ENCODE measurements at regions of chr17 and their contacts with region 1.

Region 1: GRCh38 chr17:78428836-78429617 is 50.6 kb downstream of the PGS1 start:
- DNase-seq: no peak
- ATAC-seq: no peak
- H3K4me3 ChIP-seq: no peak overlapping the region
- H3K4me3 Mint-ChIP-seq: no peak overlapping the region
- H3K27ac ChIP-seq: no peak overlapping the region
- H3K27ac Mint-ChIP-seq: no peak overlapping the region
- H3K4me1 ChIP-seq: no peaks in the 10 kb centered on the region
- H3K4me1 Mint-ChIP-seq: peaks cover 0 to 2% (median 0%) of the 10 kb centered on the region in 3 donors
- H3K27me3 ChIP-seq: no peaks in the 10 kb centered on the region
- H3K27me3 Mint-ChIP-seq: no peaks in the 10 kb centered on the region

Region 2: GRCh38 chr17:77942112-77942988 is 486.7 kb before region 1 on chr17:
- CTCF ChIA-PET with region 1: no interaction called
- POLR2A ChIA-PET with region 1: no interaction called
- DNase-seq: no peak
- ATAC-seq: no peak
- H3K4me3 ChIP-seq: no peak overlapping the region
- H3K4me3 Mint-ChIP-seq: no peak overlapping the region
- H3K27ac ChIP-seq: no peak overlapping the region
- H3K27ac Mint-ChIP-seq: no peak overlapping the region
- H3K4me1 ChIP-seq: no peaks in the 10 kb centered on the region
- H3K4me1 Mint-ChIP-seq: no peaks in the 10 kb centered on the region
- H3K27me3 ChIP-seq: peaks cover 0 to 19% of the 10 kb centered on the region in 2 experiments
- H3K27me3 Mint-ChIP-seq: peaks cover 0 to 7% of the 10 kb centered on the region in 2 donors

Region 3: DNA sequence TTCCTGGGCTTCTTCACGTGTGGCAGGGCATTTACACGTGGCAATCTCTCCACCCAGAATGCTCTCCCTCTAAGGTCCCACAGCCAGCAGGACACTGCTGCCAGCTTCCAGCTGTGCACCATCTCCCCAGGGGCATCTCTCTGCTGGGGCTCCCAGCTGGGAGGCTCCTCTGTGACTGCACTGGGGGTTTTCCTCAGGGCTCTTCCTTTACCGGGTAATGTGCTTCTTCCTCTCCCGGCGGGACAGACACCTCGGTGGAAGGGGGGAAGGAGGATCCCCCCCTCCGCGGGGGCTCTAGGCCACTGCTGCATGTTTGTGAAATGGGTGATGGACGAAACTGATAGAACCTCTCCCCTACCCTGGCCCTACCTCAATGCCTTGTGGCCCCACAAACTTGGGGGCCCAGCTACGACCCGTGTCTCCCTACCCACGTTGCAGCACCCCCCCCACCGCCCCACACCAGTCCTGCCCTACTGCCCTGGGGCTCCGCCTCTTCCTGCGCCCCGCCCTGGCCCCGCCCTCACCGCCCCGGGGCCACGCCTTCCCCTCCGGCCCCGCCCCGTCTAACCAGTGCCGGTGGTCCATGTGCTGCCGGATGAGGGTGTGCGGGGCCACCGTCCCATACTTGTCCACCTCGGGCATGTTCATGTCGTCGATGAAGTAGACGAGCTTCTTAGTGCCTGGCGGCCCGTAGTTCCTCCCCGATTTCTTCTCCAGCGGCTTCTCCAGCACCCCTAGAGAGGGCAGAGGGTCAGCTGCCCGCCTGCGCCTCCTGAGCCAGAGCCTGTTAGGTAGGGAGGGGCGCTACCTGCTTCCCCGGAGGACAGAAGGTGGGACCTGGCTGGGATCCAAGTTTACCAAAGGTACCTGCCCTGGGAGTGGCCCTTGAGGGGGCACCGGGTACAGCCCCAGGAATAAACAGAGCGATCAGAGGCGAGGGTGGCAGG is 55.5 kb after region 1 on chr17:
- CTCF ChIA-PET with region 1: no interaction called
- POLR2A ChIA-PET with region 1: no interaction called
- DNase-seq: peak; percentile 10 to 72 (median 52)
- ATAC-seq: peak; percentile 91 to 100 (median 94)
- H3K4me3 ChIP-seq: peak overlapping the region; percentile 42 to 64
- H3K4me3 Mint-ChIP-seq: peak overlapping the region; percentile 62 to 75 (median 70)
- H3K27ac ChIP-seq: no peak overlapping the region
- H3K27ac Mint-ChIP-seq: peak overlapping the region in 1 of 2 donors; percentile 16
- H3K4me1 ChIP-seq: peaks cover 0 to 14% of the 10 kb centered on the region in 2 experiments
- H3K4me1 Mint-ChIP-seq: peaks cover 5 to 8% (median 7%) of the 10 kb centered on the region in 3 donors
- H3K27me3 ChIP-seq: peaks cover 0 to 30% of the 10 kb centered on the region in 2 experiments
- H3K27me3 Mint-ChIP-seq: peaks cover 0 to 10% of the 10 kb centered on the region in 2 donors

Region 4: GRCh38 chr17:78764871-78765270 is 335.8 kb after region 1 on chr17:
- CTCF ChIA-PET with region 1: no interaction called
- POLR2A ChIA-PET with region 1: interaction called in 1 of 2 experiments, 12 read pairs
- DNase-seq: no peak
- ATAC-seq: no peak
- H3K4me3 ChIP-seq: peak overlapping the region in 1 of 2 donors; percentile 45
- H3K4me3 Mint-ChIP-seq: peak overlapping the region in 2 of 3 donors; percentile 37 to 40
- H3K27ac ChIP-seq: peak overlapping the region; percentile 50
- H3K27ac Mint-ChIP-seq: peak overlapping the region; percentile 58 to 88
- H3K4me1 ChIP-seq: peaks cover 76 to 89% of the 10 kb centered on the region in 2 experiments
- H3K4me1 Mint-ChIP-seq: peaks cover 47 to 54% (median 52%) of the 10 kb centered on the region in 3 donors
- H3K27me3 ChIP-seq: no peaks in the 10 kb centered on the region
- H3K27me3 Mint-ChIP-seq: no peaks in the 10 kb centered on the region

Region 5: DNA sequence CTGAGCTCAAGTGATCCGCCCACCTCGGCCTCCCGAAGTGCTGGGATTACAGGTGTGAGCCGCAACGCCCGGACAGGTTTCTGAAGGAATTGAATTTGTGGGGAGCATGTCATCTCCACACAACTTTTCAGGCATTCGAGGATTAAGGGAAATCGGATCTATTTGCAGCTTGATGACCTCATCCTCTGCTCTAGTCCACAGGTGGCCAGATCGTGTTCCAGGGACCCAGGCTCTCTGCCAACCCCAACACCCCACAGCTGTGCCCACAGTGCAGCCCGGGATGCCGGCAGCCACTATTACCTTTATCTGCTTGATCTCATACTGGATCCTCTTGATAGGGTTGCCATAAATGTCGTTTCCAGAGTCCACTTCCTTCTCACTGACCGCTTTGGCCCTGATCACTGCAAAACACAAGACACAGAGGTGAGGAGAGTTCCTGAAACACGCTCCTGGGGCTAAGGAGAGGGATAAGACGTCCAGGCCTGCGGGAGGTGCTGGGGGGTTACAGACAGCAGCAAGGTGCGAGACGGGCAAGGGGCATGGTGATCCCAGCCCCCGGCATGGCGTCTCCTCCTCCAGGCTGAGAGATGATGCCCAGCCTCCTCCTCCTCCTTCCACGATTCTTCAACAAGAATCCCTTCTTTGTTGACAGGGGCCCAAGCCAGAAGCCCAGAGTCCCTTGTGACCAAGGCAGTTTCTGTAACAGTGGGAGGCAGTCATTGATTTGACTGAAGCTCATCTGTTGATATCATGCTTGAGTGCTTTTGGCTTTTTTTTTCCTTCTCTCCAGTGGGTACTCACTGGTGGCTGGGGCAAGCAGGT is 444.7 kb after region 1 on chr17:
- CTCF ChIA-PET with region 1: no interaction called
- POLR2A ChIA-PET with region 1: no interaction called
- DNase-seq: no peak
- ATAC-seq: no peak
- H3K4me3 ChIP-seq: no peak overlapping the region
- H3K4me3 Mint-ChIP-seq: no peak overlapping the region
- H3K27ac ChIP-seq: no peak overlapping the region
- H3K27ac Mint-ChIP-seq: no peak overlapping the region
- H3K4me1 ChIP-seq: peaks cover 0 to 1% of the 10 kb centered on the region in 2 experiments
- H3K4me1 Mint-ChIP-seq: peaks cover 2 to 17% (median 4%) of the 10 kb centered on the region in 3 donors
- H3K27me3 ChIP-seq: peaks cover 0 to 18% of the 10 kb centered on the region in 2 experiments
- H3K27me3 Mint-ChIP-seq: peaks cover 0 to 16% of the 10 kb centered on the region in 2 donors

Measured in T-cell (primary cell).